Transverse colon (tissue), 4 donors: ENCODE measurements at regions of chrX and their contacts with region 1.

Region 1: DNA sequence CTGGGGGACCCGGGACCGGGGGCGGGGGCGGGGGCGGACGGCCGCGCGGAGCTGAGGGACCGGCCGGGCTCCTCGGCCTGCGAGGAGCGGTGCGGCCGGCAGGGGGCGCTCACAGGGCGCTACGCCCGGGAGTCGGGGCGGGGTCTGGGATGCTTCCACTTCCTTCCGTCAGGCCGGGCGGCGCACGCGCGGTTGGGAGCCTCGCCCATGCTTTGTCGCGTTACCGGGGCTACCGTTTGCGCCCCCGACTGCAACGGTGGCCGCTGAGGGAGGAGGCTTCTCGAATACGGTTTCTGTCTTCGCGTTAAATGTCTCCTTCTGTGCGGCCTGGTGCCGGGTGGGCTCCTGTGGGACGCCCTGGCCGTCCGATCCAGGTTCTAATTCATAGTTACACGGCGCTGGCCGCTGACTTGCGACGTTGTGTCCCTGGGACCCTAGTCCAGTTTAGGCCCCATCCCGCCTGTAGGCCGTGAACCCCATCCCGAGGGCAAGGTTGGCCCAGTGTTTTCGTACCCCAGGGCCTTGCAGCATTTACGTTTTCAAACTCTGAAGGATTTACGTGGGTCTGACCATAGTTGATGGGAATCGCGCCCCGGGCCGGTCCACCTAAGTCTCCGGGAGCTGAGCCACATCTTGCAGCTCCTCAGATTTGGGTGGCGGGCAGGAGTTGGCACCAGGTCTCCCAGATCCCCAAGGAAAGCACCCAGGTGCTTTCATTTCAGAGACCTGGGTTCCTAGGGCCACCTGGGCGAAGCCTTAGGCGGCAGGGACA is 549 bp downstream of the MSL3 start:
- DNase-seq: peak; percentile 88
- H3K4me3 ChIP-seq: peak overlapping the region; percentile 35 to 90 (median 71)
- H3K27ac ChIP-seq: peak overlapping the region; percentile 89 to 97 (median 92)
- H3K4me1 ChIP-seq: peaks cover 0 to 7% (median 0%) of the 10 kb centered on the region in 4 donors
- H3K27me3 ChIP-seq: no peaks in the 10 kb centered on the region
- CTCF ChIP-seq: peak; percentile 20 to 81 (median 64)
- EP300 ChIP-seq: no peak
- POLR2A ChIP-seq: peak; percentile 24

Region 2: DNA sequence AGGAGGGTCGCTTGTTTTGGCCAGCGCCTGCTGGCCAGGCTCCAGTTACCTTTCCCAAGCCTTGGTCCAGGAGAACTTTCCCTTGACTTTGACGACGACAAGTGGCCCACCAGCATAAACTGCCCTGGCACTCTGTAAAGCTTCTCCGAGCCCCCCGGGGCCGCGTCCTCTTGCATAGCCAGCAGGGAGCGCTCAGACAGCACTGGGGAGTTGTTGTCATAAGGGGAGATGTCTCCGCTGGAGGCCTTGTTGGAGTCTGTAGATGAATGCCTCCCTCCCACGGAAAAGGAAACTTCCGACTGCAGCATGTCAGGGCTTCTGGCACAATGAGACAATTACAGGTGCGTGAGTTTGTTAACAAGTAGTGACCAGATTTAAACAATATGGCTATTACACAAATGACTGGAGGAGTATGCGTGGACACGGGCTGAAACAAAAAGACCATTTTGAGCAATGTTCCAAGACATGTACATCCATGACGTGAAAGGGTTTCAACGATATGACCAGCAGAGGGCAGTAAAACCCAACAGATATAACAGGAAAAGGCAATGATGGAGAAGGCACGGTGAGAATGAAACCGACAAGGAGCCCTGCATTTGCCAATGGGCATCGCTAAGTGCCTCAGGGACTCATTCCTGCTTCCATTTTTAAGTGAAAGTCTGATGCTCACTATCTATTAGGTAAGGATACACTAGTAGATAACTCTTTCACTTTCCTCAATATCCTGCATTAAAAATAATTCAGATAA is 614.5 kb before region 1 on chrX:
- in situ Hi-C with region 1: loop called (anchors 25 kb)
- intact Hi-C with region 1: no loop called
- DNase-seq: peak; percentile 58
- H3K4me3 ChIP-seq: no peak overlapping the region
- H3K27ac ChIP-seq: no peak overlapping the region
- H3K4me1 ChIP-seq: peaks cover 0 to 5% (median 0%) of the 10 kb centered on the region in 4 donors
- H3K27me3 ChIP-seq: no peaks in the 10 kb centered on the region
- CTCF ChIP-seq: peak; percentile 48 to 68 (median 60)
- EP300 ChIP-seq: no peak
- POLR2A ChIP-seq: no peak

Region 3: GRCh38 chrX:11664211-11664911 is 94.2 kb before region 1 on chrX:
- in situ Hi-C with region 1: no loop called
- intact Hi-C with region 1: no loop called
- DNase-seq: no peak
- H3K4me3 ChIP-seq: peak overlapping the region; percentile 1 to 50 (median 32)
- H3K27ac ChIP-seq: peak overlapping the region; percentile 63 to 85 (median 78)
- H3K4me1 ChIP-seq: no peaks in the 10 kb centered on the region
- H3K27me3 ChIP-seq: peaks cover 12% of the 10 kb centered on the region
- CTCF ChIP-seq: no peak
- EP300 ChIP-seq: no peak
- POLR2A ChIP-seq: no peak